ENCODE measurements at regions of chr2 and their contacts with region 1.

Region 1: DNA sequence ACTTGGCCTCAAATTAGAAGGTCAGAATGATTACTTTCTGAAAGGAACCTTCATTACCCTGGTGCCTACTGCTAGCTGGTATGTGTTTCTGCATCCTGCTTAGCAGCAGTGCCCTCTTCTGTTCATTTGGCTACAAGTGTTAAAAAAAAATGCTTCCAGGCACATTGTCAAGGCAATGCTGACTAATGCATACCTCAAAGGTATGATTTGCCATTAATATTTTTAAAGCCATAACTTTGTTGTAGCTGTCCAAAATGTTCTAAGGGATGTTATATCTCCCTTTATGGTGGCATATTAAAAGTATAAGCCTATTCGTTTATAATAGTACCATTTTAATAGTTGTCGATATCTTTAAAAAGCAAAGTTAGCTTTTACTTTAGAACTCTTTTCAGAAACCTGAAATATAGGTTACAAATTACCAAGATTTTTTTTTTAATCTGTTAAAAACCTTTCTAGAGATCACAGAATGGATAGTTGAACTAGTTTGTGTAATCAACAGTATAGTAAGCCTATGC is 52.0 kb upstream of the FAM171B start:
- DNase-seq: peak; percentile 45 to 67
- H3K4me3 ChIP-seq: no peak overlapping the region
- H3K4me3 Mint-ChIP-seq: no peak overlapping the region
- H3K27ac Mint-ChIP-seq: no peak overlapping the region
- H3K4me1 ChIP-seq: no peaks in the 10 kb centered on the region
- H3K4me1 Mint-ChIP-seq: peaks cover 14% of the 10 kb centered on the region
- H3K27me3 ChIP-seq: no peaks in the 10 kb centered on the region
- H3K27me3 Mint-ChIP-seq: no peaks in the 10 kb centered on the region
- CTCF ChIP-seq: peak; percentile 60 to 82

Region 2: GRCh38 chr2:186274936-186275575 is 366.8 kb before region 1 on chr2:
- CTCF ChIA-PET with region 1: no interaction called
- POLR2A ChIA-PET with region 1: no interaction called
- intact Hi-C with region 1: loop called (anchors 5 kb)
- DNase-seq: no peak
- H3K4me3 ChIP-seq: no peak overlapping the region
- H3K4me3 Mint-ChIP-seq: no peak overlapping the region
- H3K27ac Mint-ChIP-seq: no peak overlapping the region
- H3K4me1 ChIP-seq: no peaks in the 10 kb centered on the region; the same call in 1 of the 2 replicates
- H3K4me1 Mint-ChIP-seq: no peaks in the 10 kb centered on the region
- H3K27me3 ChIP-seq: no peaks in the 10 kb centered on the region
- H3K27me3 Mint-ChIP-seq: no peaks in the 10 kb centered on the region
- CTCF ChIP-seq: no peak

Region 3: GRCh38 chr2:186503848-186504606 is 137.8 kb before region 1 on chr2:
- CTCF ChIA-PET with region 1: interaction called, 5 read pairs
- POLR2A ChIA-PET with region 1: no interaction called
- intact Hi-C with region 1: loop called (anchors 1 kb)
- DNase-seq: no peak
- H3K4me3 ChIP-seq: no peak overlapping the region
- H3K4me3 Mint-ChIP-seq: no peak overlapping the region
- H3K27ac Mint-ChIP-seq: no peak overlapping the region
- H3K4me1 ChIP-seq: 0 out of 2 replicates have a peak, but pooled peaks cover 4% of the 10 kb centered on the region
- H3K4me1 Mint-ChIP-seq: peaks cover 9% of the 10 kb centered on the region
- H3K27me3 ChIP-seq: no peaks in the 10 kb centered on the region
- H3K27me3 Mint-ChIP-seq: no peaks in the 10 kb centered on the region
- CTCF ChIP-seq: peak; percentile 41 to 62